Activated CD4-positive, alpha-beta T cell treated with anti-CD3 and anti-CD28 coated beads, Interleukin-2, amount 10 ng/mL, durations not matched to agents 24 days and 14 days (primary cell): ENCODE measurements at regions of chr5 and their contacts with region 1.

Region 1: DNA sequence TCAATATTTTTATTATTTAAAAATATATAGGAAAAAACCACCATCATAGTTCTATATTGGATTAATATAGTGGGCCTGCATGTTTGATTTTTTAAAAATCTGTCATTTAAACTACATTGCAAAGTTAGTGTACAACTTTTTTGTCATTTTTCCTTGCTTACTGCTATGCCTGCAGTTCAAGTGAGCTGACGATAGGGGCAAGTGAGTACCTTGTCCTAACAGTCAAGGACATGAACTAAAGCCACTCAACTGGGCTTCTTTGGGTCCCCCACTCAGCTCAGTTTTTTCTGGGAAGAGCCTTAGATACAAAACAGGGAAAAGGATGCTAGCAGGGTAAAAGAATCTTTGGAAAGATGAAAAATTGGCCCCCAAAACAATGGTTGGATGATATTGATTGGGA is 269.9 kb downstream of the MAN2A1 start:
- DNase-seq: no peak
- H3K4me3 Mint-ChIP-seq: no peak overlapping the region
- H3K27ac Mint-ChIP-seq: no peak overlapping the region
- H3K4me1 Mint-ChIP-seq: peaks cover 6% of the 10 kb centered on the region
- H3K27me3 Mint-ChIP-seq: no peaks in the 10 kb centered on the region

Region 2: GRCh38 chr5:109713453-109713852 is 246.2 kb before region 1 on chr5:
- intact Hi-C with region 1: no loop called
- DNase-seq: no peak
- H3K4me3 Mint-ChIP-seq: no peak overlapping the region
- H3K27ac Mint-ChIP-seq: no peak overlapping the region
- H3K4me1 Mint-ChIP-seq: peaks cover 14% of the 10 kb centered on the region
- H3K27me3 Mint-ChIP-seq: no peaks in the 10 kb centered on the region

Region 3: DNA sequence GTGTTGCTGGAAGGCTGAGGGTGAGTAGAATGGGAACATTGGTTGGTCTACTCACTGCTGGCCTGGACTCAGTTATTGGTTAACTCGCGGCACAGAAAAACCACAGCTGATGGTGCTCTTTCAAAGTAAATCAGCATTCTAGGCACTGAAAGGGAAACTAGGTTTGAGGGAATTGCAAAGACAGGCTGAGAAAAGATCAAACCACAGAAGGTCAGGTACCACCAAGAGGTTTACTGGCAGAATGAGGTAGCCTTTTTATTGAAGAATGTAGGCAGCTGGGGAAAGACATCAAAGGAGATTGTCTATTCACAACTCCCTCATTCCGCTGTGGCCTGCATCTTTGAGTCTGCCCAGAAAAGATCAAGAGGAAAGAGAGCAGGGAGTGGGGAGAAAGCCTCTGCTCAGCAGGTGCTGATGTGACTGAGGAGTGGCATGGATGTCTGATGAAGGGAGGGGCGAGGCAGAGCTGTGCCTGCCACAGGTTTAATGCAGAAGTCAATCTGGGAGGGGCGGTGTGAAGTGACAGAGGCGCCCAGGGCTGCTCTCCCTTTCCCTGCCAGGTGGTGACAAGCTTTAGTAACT is 14.5 kb before region 1 on chr5:
- intact Hi-C with region 1: loop called (anchors 2 kb)
- DNase-seq: peak; percentile 58
- H3K4me3 Mint-ChIP-seq: peak overlapping the region; percentile 2
- H3K27ac Mint-ChIP-seq: no peak overlapping the region
- H3K4me1 Mint-ChIP-seq: peaks cover 21% of the 10 kb centered on the region
- H3K27me3 Mint-ChIP-seq: peaks cover 2% of the 10 kb centered on the region